Activated CD4-positive, alpha-beta T cell treated with anti-CD3 and anti-CD28 coated beads for 36 hours (primary cell): ENCODE measurements at regions of chr3 and their contacts with region 1.

Region 1: GRCh38 chr3:143001369-143002082 is at the start of gene U2SURP:
- DNase-seq: peak; percentile 96
- ATAC-seq: peak; percentile 86
- H3K4me3 Mint-ChIP-seq: peak within 1 kb of the TSS; percentile 91
- H3K27ac Mint-ChIP-seq: peak within 1 kb of the TSS; percentile 99
- H3K4me1 Mint-ChIP-seq: peaks cover 40% of the 10 kb centered on the region
- H3K27me3 Mint-ChIP-seq: no peaks in the 10 kb centered on the region
- total RNA-seq, gene U2SURP: 208 to 248 TPM

Region 2: GRCh38 chr3:141402476-141403171 is 1598.9 kb before region 1 on chr3:
- CTCF ChIA-PET with region 1: no interaction called
- POLR2A ChIA-PET with region 1: no interaction called
- intact Hi-C with region 1: loop called in 1 of 2 experiments (anchors 5 kb)
- DNase-seq: peak; percentile 65
- ATAC-seq: peak; percentile 66
- H3K4me3 Mint-ChIP-seq: peak overlapping the region; percentile 84
- H3K27ac Mint-ChIP-seq: peak overlapping the region; percentile 88
- H3K4me1 Mint-ChIP-seq: peaks cover 60% of the 10 kb centered on the region
- H3K27me3 Mint-ChIP-seq: no peaks in the 10 kb centered on the region

Region 3: GRCh38 chr3:142226484-142226883 is 775.0 kb before region 1 on chr3:
- CTCF ChIA-PET with region 1: no interaction called
- POLR2A ChIA-PET with region 1: no interaction called
- intact Hi-C with region 1: loop called in 1 of 2 experiments (anchors 5 kb)
- DNase-seq: no peak
- ATAC-seq: no peak
- H3K4me3 Mint-ChIP-seq: peak overlapping the region; percentile 82
- H3K27ac Mint-ChIP-seq: no peak overlapping the region
- H3K4me1 Mint-ChIP-seq: peaks cover 13% of the 10 kb centered on the region
- H3K27me3 Mint-ChIP-seq: no peaks in the 10 kb centered on the region

Region 4: DNA sequence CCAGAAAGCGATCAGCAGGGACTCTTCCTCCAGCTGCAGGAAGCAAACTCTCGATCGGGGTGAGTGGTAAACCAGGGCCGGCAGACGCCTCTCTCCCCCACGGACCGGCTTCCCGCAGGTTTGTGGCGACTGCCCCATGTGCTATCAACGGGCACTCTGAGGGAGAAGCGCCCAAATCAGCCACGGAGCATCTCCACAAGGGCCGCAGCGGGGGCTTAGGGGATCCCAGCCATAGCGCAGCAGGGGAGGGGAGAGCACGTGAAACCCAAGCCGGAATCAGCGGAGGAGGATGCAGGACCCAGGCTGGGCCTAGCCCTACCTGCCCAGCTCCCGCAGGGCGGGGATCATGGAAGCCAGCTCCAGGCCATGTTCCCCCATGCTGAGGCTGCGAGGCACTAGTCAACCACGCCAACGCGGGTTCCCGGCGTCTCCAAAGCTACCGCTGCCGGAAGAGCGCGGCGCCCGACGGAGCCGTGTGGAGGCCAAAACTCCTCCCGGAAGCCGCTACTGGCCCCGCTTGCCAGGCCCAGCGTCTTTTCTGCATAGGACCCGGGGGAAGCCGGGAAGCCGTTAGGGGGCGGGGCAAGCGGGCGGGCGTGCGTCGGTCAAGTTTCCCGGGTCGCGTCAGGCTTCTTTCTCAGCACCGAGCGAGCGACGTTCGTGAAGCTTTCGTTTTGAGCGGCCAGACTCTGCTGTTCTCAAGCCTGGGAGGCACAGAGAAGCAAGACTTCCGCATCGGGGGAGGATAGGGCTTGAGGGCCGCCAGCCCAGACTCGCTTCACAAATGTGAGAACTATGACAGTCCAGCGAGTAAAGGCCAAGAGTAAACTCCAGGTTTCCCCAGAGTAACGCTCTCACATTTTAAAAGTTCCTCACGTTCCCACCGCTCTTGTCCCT is 423.0 kb before region 1 on chr3 and contains the start of gene ATR:
- CTCF ChIA-PET with region 1: interaction called, 3 read pairs
- POLR2A ChIA-PET with region 1: interaction called, 15 read pairs
- intact Hi-C with region 1: loop called (anchors 1 to 2 kb)
- DNase-seq: peak; percentile 98
- ATAC-seq: peak; percentile 96
- H3K4me3 Mint-ChIP-seq: peak within 1 kb of the TSS; percentile 97
- H3K27ac Mint-ChIP-seq: peak within 1 kb of the TSS; percentile 99
- H3K4me1 Mint-ChIP-seq: peaks cover 43% of the 10 kb centered on the region
- H3K27me3 Mint-ChIP-seq: no peaks in the 10 kb centered on the region
- total RNA-seq, gene ATR: 36.1 to 39.9 TPM

Region 5: DNA sequence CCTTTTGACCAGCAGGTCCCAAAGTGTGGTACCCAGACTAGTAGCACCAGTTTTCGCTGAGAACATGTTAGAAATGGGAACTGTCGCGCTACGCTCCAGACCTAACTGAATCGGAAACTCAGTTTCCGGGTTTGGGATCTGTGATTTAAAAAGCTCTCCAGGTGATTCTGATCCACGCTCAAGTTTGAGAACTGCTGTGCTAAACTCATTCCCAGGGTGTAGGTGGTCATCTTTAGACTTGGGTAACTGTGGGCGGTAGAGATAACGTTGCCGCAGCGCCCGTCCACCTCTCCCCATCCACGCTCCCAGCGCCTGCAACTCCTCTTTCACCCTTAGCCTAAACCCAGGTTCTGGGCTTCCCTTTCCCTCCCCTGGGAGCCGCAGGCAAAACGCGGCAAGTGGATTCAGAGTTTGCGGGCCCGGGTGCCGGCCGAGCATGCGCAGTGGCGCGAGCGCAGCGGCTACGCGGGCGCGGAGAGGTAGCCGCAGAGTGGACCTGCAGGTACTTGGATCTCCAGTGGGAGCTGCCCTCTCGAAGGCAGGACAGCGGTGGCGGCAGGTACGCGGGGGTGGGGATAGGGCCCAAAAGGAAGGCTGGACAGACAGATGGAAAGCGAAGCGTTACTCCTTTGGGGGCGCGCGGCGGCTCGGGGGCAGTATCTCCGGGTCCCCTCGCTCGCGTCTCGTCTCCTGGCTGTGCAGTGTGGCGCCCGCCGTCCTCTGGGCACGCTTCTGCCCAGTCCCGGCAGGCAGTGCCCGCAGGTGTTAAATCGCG is 405.4 kb before region 1 on chr3 and contains the start of gene PLS1:
- CTCF ChIA-PET with region 1: interaction called, 4 read pairs
- POLR2A ChIA-PET with region 1: no interaction called
- intact Hi-C with region 1: loop called in 1 of 2 experiments (anchors 1 kb)
- DNase-seq: peak; percentile 88
- ATAC-seq: peak; percentile 87
- H3K4me3 Mint-ChIP-seq: peak within 1 kb of the TSS; percentile 92
- H3K27ac Mint-ChIP-seq: peak within 1 kb of the TSS; percentile 90
- H3K4me1 Mint-ChIP-seq: peaks cover 16% of the 10 kb centered on the region
- H3K27me3 Mint-ChIP-seq: no peaks in the 10 kb centered on the region
- total RNA-seq, gene PLS1: 5.1 to 5.4 TPM

Region 6: DNA sequence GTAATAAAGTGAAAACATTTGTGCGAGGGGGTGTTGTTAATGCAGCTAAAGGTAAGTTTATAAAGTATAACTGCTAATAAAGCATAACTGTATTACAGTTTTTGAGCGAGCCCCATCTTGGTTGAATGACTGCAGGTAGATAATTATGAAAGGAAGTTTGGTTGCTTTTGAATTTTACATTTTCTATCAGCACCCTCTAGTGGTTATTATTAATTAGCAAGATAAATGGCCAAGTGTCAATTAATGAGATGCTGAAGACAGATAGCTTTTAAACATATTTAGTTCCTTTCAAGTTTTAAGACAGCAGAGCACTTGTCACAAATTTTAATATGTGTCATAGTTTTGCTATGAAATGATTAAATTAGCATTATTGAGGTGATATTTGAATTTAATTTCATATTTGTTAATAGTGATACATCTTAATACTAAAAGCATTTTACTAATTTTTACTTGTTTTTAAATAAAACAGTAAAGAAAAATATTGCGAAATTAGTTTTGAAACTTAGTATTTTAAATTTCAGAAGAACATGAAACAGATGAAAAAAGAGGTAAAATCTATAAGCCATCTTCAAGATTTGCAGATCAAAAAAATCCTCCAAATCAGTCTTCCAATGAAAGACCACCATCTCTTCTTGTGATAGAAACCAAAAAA is 14.9 kb after region 1 on chr3:
- CTCF ChIA-PET with region 1: interaction called, 45 read pairs
- POLR2A ChIA-PET with region 1: interaction called, 19 read pairs
- intact Hi-C with region 1: loop called in 1 of 2 experiments (anchors 2 kb)
- DNase-seq: no peak
- ATAC-seq: no peak
- H3K4me3 Mint-ChIP-seq: no peak overlapping the region
- H3K27ac Mint-ChIP-seq: no peak overlapping the region
- H3K4me1 Mint-ChIP-seq: peaks cover 24% of the 10 kb centered on the region
- H3K27me3 Mint-ChIP-seq: no peaks in the 10 kb centered on the region

Region 7: GRCh38 chr3:143054011-143054410 is 52.5 kb after region 1 on chr3:
- CTCF ChIA-PET with region 1: no interaction called
- POLR2A ChIA-PET with region 1: no interaction called
- intact Hi-C with region 1: no loop called
- DNase-seq: no peak
- ATAC-seq: no peak
- H3K4me3 Mint-ChIP-seq: no peak overlapping the region
- H3K27ac Mint-ChIP-seq: no peak overlapping the region
- H3K4me1 Mint-ChIP-seq: peaks cover 2% of the 10 kb centered on the region
- H3K27me3 Mint-ChIP-seq: no peaks in the 10 kb centered on the region